Activated CD4-positive, alpha-beta memory T cell treated with anti-CD3 and anti-CD28 coated beads for 36 hours (primary cell): ENCODE measurements at regions of chr1 and their contacts with region 1.

Region 1: DNA sequence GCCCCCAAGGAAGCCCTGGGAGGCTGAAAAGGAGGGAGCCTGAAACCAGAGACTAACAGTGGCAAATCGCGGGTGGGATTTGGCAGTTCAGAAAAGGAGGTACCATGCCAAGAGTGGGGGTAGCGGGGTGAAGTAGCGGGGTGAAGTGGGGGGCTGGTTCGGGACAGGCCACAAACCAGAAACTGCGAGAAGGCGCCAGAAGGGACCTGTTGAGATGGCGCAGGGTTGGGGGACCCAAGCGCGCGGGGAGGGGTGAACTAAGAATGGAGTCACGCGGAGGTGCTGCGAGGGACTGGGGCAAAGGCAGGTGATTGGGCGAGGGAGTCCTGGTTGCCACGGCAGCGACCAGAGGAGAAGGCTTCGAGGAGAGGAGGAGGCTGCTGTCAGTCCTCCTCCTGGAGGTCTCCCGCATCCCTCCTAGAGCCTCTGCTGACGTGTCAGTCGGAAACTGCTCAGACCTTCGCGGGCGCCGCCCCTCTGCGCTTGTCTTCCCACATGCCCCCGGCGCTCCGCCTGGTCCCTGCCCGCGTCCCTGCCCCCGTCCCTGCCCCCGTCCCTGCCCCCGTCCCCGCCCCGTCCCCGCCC is 438 bp upstream of the MIA3 start:
- DNase-seq: peak; percentile 93
- H3K4me3 Mint-ChIP-seq: peak overlapping the region; percentile 79
- H3K27ac Mint-ChIP-seq: peak overlapping the region; percentile 63
- H3K4me1 Mint-ChIP-seq: peaks cover 24% of the 10 kb centered on the region
- H3K27me3 Mint-ChIP-seq: peaks cover 15% of the 10 kb centered on the region

Region 2: GRCh38 chr1:222634180-222635013 is 16.9 kb after region 1 on chr1:
- CTCF ChIA-PET with region 1: interaction called, 15 read pairs
- POLR2A ChIA-PET with region 1: no interaction called
- intact Hi-C with region 1: no loop called
- DNase-seq: peak; percentile 33
- H3K4me3 Mint-ChIP-seq: no peak overlapping the region
- H3K27ac Mint-ChIP-seq: no peak overlapping the region
- H3K4me1 Mint-ChIP-seq: peaks cover 2% of the 10 kb centered on the region
- H3K27me3 Mint-ChIP-seq: no peaks in the 10 kb centered on the region

Region 3: GRCh38 chr1:222643938-222644635 is 26.6 kb after region 1 on chr1:
- CTCF ChIA-PET with region 1: no interaction called
- POLR2A ChIA-PET with region 1: interaction called, 4 read pairs
- intact Hi-C with region 1: loop called (anchors 1 kb)
- DNase-seq: peak; percentile 99
- H3K4me3 Mint-ChIP-seq: peak overlapping the region; percentile 99
- H3K27ac Mint-ChIP-seq: peak overlapping the region; percentile 94
- H3K4me1 Mint-ChIP-seq: peaks cover 22% of the 10 kb centered on the region
- H3K27me3 Mint-ChIP-seq: no peaks in the 10 kb centered on the region

Region 4: DNA sequence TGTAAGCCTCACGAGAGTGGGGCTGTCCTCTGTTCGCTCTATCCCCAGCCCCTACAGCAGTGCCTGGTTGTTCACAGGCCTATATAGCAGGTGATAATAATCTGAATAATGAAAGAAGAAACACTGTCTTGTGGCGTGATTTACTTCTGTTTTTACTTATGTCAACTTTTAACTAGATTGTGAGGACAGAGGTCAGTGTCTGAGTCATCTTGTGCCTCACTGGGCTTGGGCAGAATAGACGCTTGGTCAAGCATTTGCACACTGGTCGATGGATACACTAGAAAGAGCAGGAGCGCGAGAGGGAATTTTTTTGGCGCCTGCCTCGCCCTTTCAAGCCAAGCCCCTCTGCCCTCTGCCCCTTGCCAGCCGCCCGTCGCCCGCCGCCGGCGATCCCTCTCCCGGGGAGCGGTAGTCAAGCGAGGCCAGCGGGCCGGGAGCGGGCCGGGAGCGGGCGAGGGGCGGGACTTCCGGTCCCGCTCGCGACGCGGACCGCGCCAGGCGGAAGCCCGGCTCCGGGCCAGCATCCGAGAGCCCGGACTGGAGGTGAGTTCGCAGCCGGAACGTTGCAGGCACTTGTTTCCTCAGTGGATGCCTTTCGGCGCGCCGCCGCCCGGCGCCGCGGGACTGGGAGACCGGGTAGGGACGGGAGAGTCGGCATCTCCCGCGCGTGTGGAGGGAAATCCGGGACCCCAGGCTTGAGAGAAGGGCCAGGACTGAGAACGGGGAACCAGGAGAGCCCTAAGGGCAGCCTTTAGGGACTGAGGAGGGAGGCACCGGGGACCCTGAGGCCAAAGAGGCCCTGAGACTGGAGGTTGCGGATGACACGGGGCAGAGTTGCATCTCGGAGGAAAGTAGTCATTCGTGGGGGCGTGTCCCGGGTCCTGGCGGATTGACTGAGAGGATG is 197.3 kb after region 1 on chr1 and contains the start of gene DISP1:
- CTCF ChIA-PET with region 1: no interaction called
- POLR2A ChIA-PET with region 1: no interaction called
- intact Hi-C with region 1: loop called (anchors 5 kb)
- DNase-seq: peak; percentile 87
- H3K4me3 Mint-ChIP-seq: peak within 1 kb of the TSS; percentile 89
- H3K27ac Mint-ChIP-seq: peak within 1 kb of the TSS; percentile 85
- H3K4me1 Mint-ChIP-seq: peaks cover 26% of the 10 kb centered on the region
- H3K27me3 Mint-ChIP-seq: peaks cover 1% of the 10 kb centered on the region
- total RNA-seq, gene DISP1: 0.81 to 1.1 TPM